Endothelial cell of umbilical vein (primary cell): ENCODE measurements at regions of chr18 and their contacts with region 1.

Region 1: DNA sequence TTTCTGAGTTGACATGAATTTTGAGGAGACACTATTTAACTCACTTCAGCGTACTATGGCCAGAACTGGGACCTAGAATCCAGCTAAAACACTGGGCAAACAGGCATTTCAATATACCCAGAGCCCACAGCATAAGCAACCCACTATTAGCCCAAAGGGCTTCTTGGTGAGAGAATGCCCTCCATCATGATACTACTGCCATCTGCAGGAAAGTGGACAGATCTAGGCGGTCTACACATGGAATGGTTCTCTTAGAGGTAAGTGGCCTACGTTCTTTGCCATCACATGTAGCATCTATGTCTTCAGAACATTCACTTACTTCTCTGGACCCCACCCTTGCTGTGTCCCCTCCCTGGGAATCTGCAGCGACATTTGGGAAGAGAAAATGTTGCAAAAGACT is 181.3 kb upstream of the LINC00305 start:
- DNase-seq: peak; percentile 26
- H3K4me3 ChIP-seq: no peak overlapping the region
- H3K27ac ChIP-seq: no peak overlapping the region
- H3K4me1 ChIP-seq: peaks cover 23% of the 10 kb centered on the region
- H3K27me3 ChIP-seq: no peaks in the 10 kb centered on the region
- CTCF ChIP-seq: peak in 1 of 2 donors; percentile 16
- POLR2A ChIP-seq: no peak

Region 2: GRCh38 chr18:64037812-64038414 is 292.2 kb before region 1 on chr18:
- CTCF ChIA-PET with region 1: no interaction called
- POLR2A ChIA-PET with region 1: no interaction called
- dilution Hi-C with region 1: no loop called
- intact Hi-C with region 1: loop called (anchors 1 kb)
- DNase-seq: peak; percentile 54
- H3K4me3 ChIP-seq: no peak overlapping the region
- H3K27ac ChIP-seq: no peak overlapping the region
- H3K4me1 ChIP-seq: no peaks in the 10 kb centered on the region
- H3K27me3 ChIP-seq: no peaks in the 10 kb centered on the region
- CTCF ChIP-seq: peak; percentile 14 to 38
- POLR2A ChIP-seq: no peak

Region 3: GRCh38 chr18:64097497-64097896 is 232.7 kb before region 1 on chr18:
- CTCF ChIA-PET with region 1: no interaction called
- POLR2A ChIA-PET with region 1: no interaction called
- dilution Hi-C with region 1: no loop called
- intact Hi-C with region 1: loop called (anchors 5 kb)
- DNase-seq: peak; percentile 7
- H3K4me3 ChIP-seq: no peak overlapping the region
- H3K27ac ChIP-seq: no peak overlapping the region
- H3K4me1 ChIP-seq: no peaks in the 10 kb centered on the region
- H3K27me3 ChIP-seq: no peaks in the 10 kb centered on the region
- CTCF ChIP-seq: no peak
- POLR2A ChIP-seq: no peak

Region 4: GRCh38 chr18:64119916-64120315 is 210.2 kb before region 1 on chr18:
- CTCF ChIA-PET with region 1: no interaction called
- POLR2A ChIA-PET with region 1: no interaction called
- dilution Hi-C with region 1: no loop called
- intact Hi-C with region 1: loop called (anchors 1 kb)
- DNase-seq: peak; percentile 1
- H3K4me3 ChIP-seq: no peak overlapping the region
- H3K27ac ChIP-seq: no peak overlapping the region
- H3K4me1 ChIP-seq: no peaks in the 10 kb centered on the region
- H3K27me3 ChIP-seq: no peaks in the 10 kb centered on the region
- CTCF ChIP-seq: no peak
- POLR2A ChIP-seq: no peak

Region 5: GRCh38 chr18:64276311-64277090 is 53.7 kb before region 1 on chr18:
- CTCF ChIA-PET with region 1: no interaction called
- POLR2A ChIA-PET with region 1: no interaction called
- dilution Hi-C with region 1: no loop called
- intact Hi-C with region 1: loop called (anchors 2 kb)
- DNase-seq: peak; percentile 52
- H3K4me3 ChIP-seq: no peak overlapping the region
- H3K27ac ChIP-seq: no peak overlapping the region
- H3K4me1 ChIP-seq: peaks cover 7% of the 10 kb centered on the region
- H3K27me3 ChIP-seq: no peaks in the 10 kb centered on the region
- CTCF ChIP-seq: no peak
- POLR2A ChIP-seq: no peak

Region 6: DNA sequence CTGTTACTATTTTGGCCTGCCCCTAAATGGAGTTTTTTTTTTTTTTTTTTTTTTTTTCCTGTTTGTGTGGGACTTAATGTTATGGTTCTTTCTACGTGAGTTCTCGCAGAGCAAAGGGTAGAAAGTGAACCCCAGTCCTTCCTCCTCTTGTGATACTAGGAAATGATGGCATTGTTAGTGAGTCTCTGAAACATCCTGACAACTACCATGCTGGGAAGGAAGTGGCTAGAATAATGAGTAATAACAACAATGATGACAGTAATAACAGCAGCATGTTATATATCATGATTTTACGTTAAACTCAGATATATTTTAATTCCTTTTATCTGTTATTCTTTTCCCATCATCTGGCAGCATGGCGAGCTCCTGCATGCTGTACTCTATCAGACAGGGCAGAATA is 34.9 kb after region 1 on chr18:
- CTCF ChIA-PET with region 1: no interaction called
- POLR2A ChIA-PET with region 1: no interaction called
- dilution Hi-C with region 1: no loop called
- intact Hi-C with region 1: loop called (anchors 1 kb)
- DNase-seq: peak; percentile 56
- H3K4me3 ChIP-seq: no peak overlapping the region
- H3K27ac ChIP-seq: peak overlapping the region; percentile 34
- H3K4me1 ChIP-seq: peaks cover 16% of the 10 kb centered on the region
- H3K27me3 ChIP-seq: no peaks in the 10 kb centered on the region
- CTCF ChIP-seq: no peak
- POLR2A ChIP-seq: no peak

Region 7: DNA sequence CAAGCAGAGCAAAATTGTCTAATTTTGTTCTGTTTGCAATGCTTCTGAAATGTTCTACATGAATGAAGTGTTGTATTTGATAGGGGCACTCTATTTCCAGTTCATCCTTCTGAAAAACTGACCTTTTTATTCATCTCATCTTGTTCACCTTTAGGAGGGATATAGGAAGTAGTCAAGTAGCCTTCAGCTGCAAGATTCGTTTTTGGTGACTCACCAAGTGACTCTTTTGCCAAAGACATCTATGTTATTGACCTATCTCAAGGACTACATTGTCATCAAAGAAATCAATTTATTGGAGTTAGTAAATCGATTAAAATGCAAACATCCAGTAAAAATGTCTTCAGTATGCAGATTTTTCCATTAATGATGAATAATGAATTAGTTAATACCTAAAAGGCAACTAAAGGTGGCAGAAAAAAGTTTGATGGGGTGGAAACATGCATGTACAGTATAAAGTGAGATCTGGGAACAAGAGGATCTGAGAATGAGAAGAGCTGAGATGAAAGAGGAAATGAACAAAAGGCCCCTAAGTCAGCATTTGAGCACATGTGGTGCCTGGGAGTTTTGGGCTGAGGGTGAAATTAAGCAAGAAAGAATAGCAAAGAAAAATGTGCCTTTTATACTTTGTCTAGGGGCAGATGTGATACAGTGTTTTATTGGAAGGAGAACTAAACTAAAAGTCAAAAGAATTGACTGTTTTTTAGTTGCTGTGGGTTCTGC is 73.8 kb after region 1 on chr18:
- CTCF ChIA-PET with region 1: interaction called, 9 read pairs
- POLR2A ChIA-PET with region 1: no interaction called
- dilution Hi-C with region 1: no loop called
- intact Hi-C with region 1: loop called (anchors 1 kb)
- DNase-seq: no peak
- H3K4me3 ChIP-seq: no peak overlapping the region
- H3K27ac ChIP-seq: peak overlapping the region; percentile 76
- H3K4me1 ChIP-seq: peaks cover 3% of the 10 kb centered on the region
- H3K27me3 ChIP-seq: no peaks in the 10 kb centered on the region
- CTCF ChIP-seq: no peak
- POLR2A ChIP-seq: no peak